Heart left ventricle (tissue), 16 donors: ENCODE measurements at regions of chr3 and their contacts with region 1.

Region 1: GRCh38 chr3:97099381-97099780 is 285.0 kb downstream of the EPHA6 start:
- DNase-seq: no peak
- ATAC-seq: no peak
- H3K4me3 ChIP-seq: no peak overlapping the region
- H3K27ac ChIP-seq: no peak overlapping the region
- H3K4me1 ChIP-seq: no peaks in the 10 kb centered on the region
- H3K27me3 ChIP-seq: no peaks in the 10 kb centered on the region
- CTCF ChIP-seq: no peak
- POLR2A ChIP-seq: no peak

Region 2: DNA sequence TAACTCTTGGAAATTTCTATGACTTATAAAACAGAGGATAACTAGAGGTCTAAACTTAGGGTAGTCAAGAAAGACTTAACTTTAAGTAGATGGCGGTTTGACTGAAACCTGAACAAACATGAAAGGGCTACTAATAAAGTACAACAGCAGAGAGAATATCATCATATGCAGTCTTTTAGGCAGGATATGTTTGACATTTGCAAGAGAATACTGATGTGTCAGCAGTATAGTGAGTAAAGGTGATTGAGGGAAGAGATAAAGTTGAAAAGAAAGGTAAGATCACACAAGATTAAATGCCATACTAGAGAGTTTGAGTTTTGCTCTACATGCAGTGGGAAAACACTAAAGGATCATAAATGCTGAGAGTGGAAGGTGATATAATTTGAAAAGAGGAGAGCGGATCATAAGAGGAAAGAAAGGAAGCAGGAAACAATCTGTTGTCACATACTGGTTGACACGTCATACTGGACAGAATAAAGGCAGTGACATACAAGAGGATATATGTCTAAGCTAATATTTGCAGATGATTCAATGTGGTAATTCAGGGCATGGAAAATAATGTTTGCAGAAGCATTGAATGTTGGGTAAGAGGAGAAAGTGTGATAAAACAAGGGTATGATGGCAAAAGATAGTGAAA is 62.0 kb before region 1 on chr3:
- intact Hi-C with region 1: loop called in 1 of 10 experiments (anchors 10 kb)
- DNase-seq: no peak
- ATAC-seq: no peak
- H3K4me3 ChIP-seq: no peak overlapping the region
- H3K27ac ChIP-seq: no peak overlapping the region
- H3K4me1 ChIP-seq: no peaks in the 10 kb centered on the region
- H3K27me3 ChIP-seq: no peaks in the 10 kb centered on the region
- CTCF ChIP-seq: no peak
- POLR2A ChIP-seq: no peak

Region 3: DNA sequence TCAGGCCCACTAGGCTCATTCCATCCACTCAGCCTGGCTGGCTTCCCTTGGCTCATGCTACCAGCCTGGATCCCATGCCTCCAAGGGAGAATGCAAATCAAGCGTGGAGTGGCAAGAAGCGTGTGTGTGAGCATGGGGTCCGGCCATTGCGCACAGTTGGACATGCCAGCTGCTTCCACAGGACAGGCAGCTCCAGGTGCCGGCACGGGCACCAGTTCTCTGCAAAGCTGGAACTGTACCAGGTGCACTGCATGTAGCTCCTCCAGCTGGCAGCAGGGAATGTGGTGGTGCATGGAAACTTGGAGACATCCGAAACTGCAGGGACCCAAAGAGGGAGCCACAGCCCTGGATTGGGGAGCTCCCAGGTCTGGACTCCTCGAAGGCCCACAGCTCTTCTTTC is 164.8 kb after region 1 on chr3:
- intact Hi-C with region 1: no loop called
- DNase-seq: no peak
- ATAC-seq: no peak
- H3K4me3 ChIP-seq: no peak overlapping the region
- H3K27ac ChIP-seq: no peak overlapping the region
- H3K4me1 ChIP-seq: no peaks in the 10 kb centered on the region
- H3K27me3 ChIP-seq: no peaks in the 10 kb centered on the region
- CTCF ChIP-seq: no peak
- POLR2A ChIP-seq: no peak